CD4-positive, alpha-beta T cell (primary cell): ENCODE measurements at regions of chr11 and their contacts with region 1.

Region 1: DNA sequence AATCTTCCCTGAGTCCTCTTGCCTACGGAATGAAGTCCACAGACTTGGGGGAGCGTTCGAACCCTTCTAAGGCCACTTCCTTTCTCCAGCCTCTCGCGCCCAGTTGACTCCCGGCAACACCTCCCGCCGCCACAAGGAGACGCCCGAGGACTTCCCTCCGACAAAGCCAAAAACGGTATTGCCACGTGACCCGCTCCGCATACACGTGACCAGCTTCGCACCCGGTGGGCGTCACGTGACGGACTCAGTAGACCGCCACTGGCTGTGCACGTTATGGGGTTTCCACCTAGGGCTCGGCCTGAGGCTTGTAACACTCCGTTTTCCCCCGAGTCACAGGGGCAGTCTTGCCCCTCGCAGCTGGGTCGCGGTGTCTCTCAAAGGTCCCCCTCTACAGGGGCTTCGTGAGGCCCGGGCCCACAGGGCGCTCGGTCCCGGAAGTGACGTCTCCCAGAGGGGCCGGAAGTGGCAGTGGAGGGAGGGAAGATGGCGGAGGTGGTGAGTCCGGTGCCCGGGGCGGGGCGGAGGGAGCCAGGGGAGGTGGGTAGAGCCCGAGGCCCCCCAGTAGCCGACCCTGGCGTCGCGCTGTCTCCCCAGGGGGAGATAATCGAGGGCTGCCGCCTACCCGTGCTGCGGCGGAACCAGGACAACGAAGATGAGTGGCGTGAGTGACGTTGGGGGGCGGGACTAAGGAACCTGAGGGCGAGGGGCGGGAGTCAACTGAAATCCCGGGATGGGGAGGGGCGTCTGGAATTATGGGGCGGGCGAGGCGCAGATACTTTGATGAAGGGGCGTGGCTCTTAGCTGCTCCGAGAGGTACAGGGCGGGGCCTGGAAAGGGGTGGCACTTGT is at the start of gene KAT5:
- DNase-seq: peak; percentile 95 to 99 (median 96)
- ATAC-seq: peak; percentile 79
- H3K4me3 ChIP-seq: peak within 1 kb of the TSS; percentile 82
- H3K4me3 Mint-ChIP-seq: peak within 1 kb of the TSS; percentile 98
- H3K27ac ChIP-seq: peak within 1 kb of the TSS; percentile 99
- H3K27ac Mint-ChIP-seq: peak within 1 kb of the TSS; percentile 99
- H3K4me1 ChIP-seq: peaks cover 30% of the 10 kb centered on the region
- H3K4me1 Mint-ChIP-seq: peaks cover 23% of the 10 kb centered on the region
- H3K27me3 ChIP-seq: no peaks in the 10 kb centered on the region
- H3K27me3 Mint-ChIP-seq: no peaks in the 10 kb centered on the region
- CTCF ChIP-seq: peak; percentile 98
- total RNA-seq, gene KAT5: 90.9 to 99.6 TPM

Region 2: GRCh38 chr11:65625628-65626342 is 86.2 kb before region 1 on chr11:
- CTCF ChIA-PET with region 1: interaction called, 11 read pairs
- POLR2A ChIA-PET with region 1: interaction called, 7 read pairs
- intact Hi-C with region 1: loop called (anchors 2 to 5 kb)
- DNase-seq: peak; percentile 42 to 83 (median 54)
- ATAC-seq: peak; percentile 84
- H3K4me3 ChIP-seq: no peak overlapping the region
- H3K4me3 Mint-ChIP-seq: no peak overlapping the region
- H3K27ac ChIP-seq: no peak overlapping the region
- H3K27ac Mint-ChIP-seq: no peak overlapping the region
- H3K4me1 ChIP-seq: peaks cover 9% of the 10 kb centered on the region
- H3K4me1 Mint-ChIP-seq: peaks cover 13% of the 10 kb centered on the region
- H3K27me3 ChIP-seq: no peaks in the 10 kb centered on the region
- H3K27me3 Mint-ChIP-seq: no peaks in the 10 kb centered on the region
- CTCF ChIP-seq: peak; percentile 79

Region 3: GRCh38 chr11:65662799-65663638 is 49.0 kb before region 1 on chr11 and contains the start of gene RELA:
- CTCF ChIA-PET with region 1: interaction called, 6 read pairs
- POLR2A ChIA-PET with region 1: interaction called, 22 read pairs
- intact Hi-C with region 1: loop called in 1 of 2 experiments (anchors 5 kb)
- DNase-seq: peak; percentile 79 to 96 (median 89)
- ATAC-seq: peak; percentile 83
- H3K4me3 ChIP-seq: peak within 1 kb of the TSS; percentile 97
- H3K4me3 Mint-ChIP-seq: peak within 1 kb of the TSS; percentile 92
- H3K27ac ChIP-seq: peak within 1 kb of the TSS; percentile 96 to 97
- H3K27ac Mint-ChIP-seq: peak within 1 kb of the TSS; percentile 94
- H3K4me1 ChIP-seq: peaks cover 59% of the 10 kb centered on the region
- H3K4me1 Mint-ChIP-seq: peaks cover 33% of the 10 kb centered on the region
- H3K27me3 ChIP-seq: no peaks in the 10 kb centered on the region
- H3K27me3 Mint-ChIP-seq: no peaks in the 10 kb centered on the region
- CTCF ChIP-seq: no peak
- total RNA-seq, gene RELA: 379 to 382 TPM

Region 4: DNA sequence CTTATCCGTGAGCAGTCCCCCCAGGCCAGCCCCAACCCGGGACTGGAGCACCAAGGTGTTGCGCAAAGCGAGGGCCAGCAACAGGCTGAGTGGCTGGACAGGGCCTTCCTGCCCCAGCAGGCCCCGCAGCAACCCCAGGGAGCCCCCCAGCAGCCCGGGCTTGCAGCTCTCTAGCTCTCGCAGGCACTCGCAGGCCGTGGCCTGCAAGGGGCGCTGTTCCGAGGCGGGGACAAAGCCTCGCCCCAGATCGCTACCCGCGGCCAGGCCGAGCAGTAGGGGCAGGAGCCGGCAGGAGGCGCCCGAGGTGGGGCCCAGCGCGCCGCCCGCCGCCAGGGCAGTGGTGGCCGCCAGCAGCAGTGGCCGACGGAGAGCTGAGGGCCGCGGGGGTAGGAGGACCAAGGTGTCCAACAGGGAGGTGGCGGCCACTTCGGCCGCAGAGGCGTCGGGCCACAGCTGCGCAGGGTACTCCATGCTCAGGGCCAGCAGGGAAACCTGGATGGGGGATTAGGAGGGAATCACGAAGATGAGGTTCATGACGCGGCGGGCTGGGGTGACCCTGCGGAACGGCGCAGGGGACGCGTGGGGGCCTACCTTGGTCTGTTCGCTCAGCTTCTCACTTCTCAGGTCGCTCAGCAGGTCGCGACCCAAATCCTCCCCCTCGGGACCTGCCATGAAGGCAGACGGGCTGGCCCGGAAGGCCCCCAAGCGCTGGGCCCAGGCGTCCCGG is 68.0 kb after region 1 on chr11:
- CTCF ChIA-PET with region 1: interaction called, 40 read pairs
- POLR2A ChIA-PET with region 1: interaction called, 10 read pairs
- intact Hi-C with region 1: no loop called
- DNase-seq: peak; percentile 57 to 89 (median 72)
- ATAC-seq: peak; percentile 73
- H3K4me3 ChIP-seq: peak overlapping the region; percentile 92
- H3K4me3 Mint-ChIP-seq: peak overlapping the region; percentile 88
- H3K27ac ChIP-seq: peak overlapping the region in 1 of 2 donors; percentile 17
- H3K27ac Mint-ChIP-seq: peak overlapping the region; percentile 56
- H3K4me1 ChIP-seq: peaks cover 46% of the 10 kb centered on the region
- H3K4me1 Mint-ChIP-seq: peaks cover 17% of the 10 kb centered on the region
- H3K27me3 ChIP-seq: no peaks in the 10 kb centered on the region
- H3K27me3 Mint-ChIP-seq: peaks cover 12% of the 10 kb centered on the region
- CTCF ChIP-seq: peak; percentile 93

Region 5: GRCh38 chr11:65833297-65834030 is 121.5 kb after region 1 on chr11 and contains the start of gene SNX32:
- CTCF ChIA-PET with region 1: interaction called, 12 read pairs
- POLR2A ChIA-PET with region 1: interaction called, 7 read pairs
- intact Hi-C with region 1: no loop called
- DNase-seq: peak; percentile 88 to 97 (median 93)
- ATAC-seq: peak; percentile 100
- H3K4me3 ChIP-seq: peak within 1 kb of the TSS; percentile 76
- H3K4me3 Mint-ChIP-seq: no peak within 1 kb of the TSS
- H3K27ac ChIP-seq: peak within 1 kb of the TSS; percentile 18 to 31
- H3K27ac Mint-ChIP-seq: no peak within 1 kb of the TSS
- H3K4me1 ChIP-seq: peaks cover 24% of the 10 kb centered on the region
- H3K4me1 Mint-ChIP-seq: peaks cover 6% of the 10 kb centered on the region
- H3K27me3 ChIP-seq: no peaks in the 10 kb centered on the region
- H3K27me3 Mint-ChIP-seq: no peaks in the 10 kb centered on the region
- CTCF ChIP-seq: no peak
- total RNA-seq, gene SNX32: 0.33 to 0.61 TPM

Region 6: DNA sequence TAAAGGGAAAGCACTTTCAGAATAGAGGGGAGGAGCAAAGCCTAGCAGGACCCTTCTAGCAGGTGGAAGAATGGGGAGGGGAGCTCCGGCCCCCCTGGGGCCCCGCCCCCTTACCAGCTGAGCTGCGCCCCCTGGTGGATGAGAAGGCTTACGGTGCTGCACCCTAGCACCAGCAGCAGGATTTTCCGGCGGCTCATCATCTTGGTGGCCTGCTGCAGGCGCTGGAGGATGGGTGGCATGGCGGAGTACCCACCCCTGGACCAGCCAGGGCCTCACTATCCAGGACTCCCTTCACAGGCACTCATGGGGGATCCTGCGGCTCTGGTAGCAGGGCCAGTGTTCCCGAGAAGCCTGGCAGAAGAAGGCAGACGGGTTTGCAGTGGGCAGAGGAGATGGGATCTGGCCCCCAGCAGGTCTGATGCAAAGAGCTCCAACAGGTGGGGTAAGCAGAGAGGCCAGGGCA is 333.2 kb after region 1 on chr11:
- CTCF ChIA-PET with region 1: interaction called, 8 read pairs
- POLR2A ChIA-PET with region 1: interaction called, 6 read pairs
- intact Hi-C with region 1: loop called in 1 of 2 experiments (anchors 10 kb)
- DNase-seq: peak; percentile 72 to 92 (median 82)
- ATAC-seq: peak; percentile 98
- H3K4me3 ChIP-seq: no peak overlapping the region
- H3K4me3 Mint-ChIP-seq: no peak overlapping the region
- H3K27ac ChIP-seq: no peak overlapping the region
- H3K27ac Mint-ChIP-seq: no peak overlapping the region
- H3K4me1 ChIP-seq: peaks cover 26% of the 10 kb centered on the region
- H3K4me1 Mint-ChIP-seq: peaks cover 17% of the 10 kb centered on the region
- H3K27me3 ChIP-seq: no peaks in the 10 kb centered on the region
- H3K27me3 Mint-ChIP-seq: peaks cover 5% of the 10 kb centered on the region
- CTCF ChIP-seq: peak; percentile 91

Region 7: DNA sequence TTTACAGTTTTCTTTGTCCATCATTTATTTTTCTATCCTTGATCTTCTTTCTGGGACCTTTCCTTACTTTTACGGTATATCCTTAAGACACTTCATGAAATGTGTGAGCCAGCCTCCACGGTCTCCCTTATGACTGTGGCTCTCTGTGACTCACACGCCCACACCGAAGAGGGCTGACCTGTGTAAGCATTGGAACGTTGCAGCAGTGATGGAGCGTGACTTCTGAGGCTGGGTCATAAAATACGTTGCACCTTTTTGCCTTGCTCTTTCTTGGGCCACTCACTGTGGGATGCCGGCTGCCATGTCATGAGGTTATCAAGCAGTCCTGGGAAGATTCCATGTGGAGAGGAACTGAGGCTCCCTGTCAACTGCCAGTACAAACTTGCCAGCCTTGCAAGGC is 460.1 kb after region 1 on chr11:
- CTCF ChIA-PET with region 1: no interaction called
- POLR2A ChIA-PET with region 1: no interaction called
- intact Hi-C with region 1: no loop called
- DNase-seq: no peak
- ATAC-seq: no peak
- H3K4me3 ChIP-seq: no peak overlapping the region
- H3K4me3 Mint-ChIP-seq: no peak overlapping the region
- H3K27ac ChIP-seq: no peak overlapping the region
- H3K27ac Mint-ChIP-seq: no peak overlapping the region
- H3K4me1 ChIP-seq: peaks cover 3% of the 10 kb centered on the region
- H3K4me1 Mint-ChIP-seq: peaks cover 50% of the 10 kb centered on the region
- H3K27me3 ChIP-seq: no peaks in the 10 kb centered on the region
- H3K27me3 Mint-ChIP-seq: no peaks in the 10 kb centered on the region
- CTCF ChIP-seq: no peak

Region 8: DNA sequence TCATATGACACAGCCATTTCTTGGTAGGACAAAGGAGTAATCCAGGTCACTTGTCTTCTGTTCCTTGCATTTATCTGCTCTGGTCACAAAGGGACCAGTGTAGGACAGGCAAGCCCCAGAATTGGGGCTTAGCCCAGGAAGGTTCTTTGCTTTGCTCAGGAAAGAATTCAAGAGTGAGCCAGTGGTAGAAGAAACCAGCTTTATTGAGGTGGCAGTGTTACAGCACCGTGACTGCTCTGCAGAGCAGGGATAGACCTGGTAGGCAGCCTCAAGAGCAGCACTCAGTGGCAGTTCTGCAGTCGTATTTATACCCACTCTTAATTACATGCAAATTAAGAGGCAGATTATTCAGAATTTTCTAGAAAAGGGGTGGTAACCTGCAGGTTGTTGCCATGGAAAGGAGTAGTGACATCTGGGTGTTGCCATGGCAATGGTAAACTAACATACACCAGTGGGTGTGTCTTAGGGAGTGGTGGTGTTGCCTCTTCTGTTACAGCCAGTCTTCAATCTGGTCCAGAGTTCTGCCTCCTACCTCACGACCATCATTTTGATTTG is 471.6 kb after region 1 on chr11:
- CTCF ChIA-PET with region 1: no interaction called
- POLR2A ChIA-PET with region 1: no interaction called
- intact Hi-C with region 1: no loop called
- DNase-seq: peak in 5 of 14 experiments; percentile 1 to 77 (median 49)
- ATAC-seq: peak; percentile 91
- H3K4me3 ChIP-seq: no peak overlapping the region
- H3K4me3 Mint-ChIP-seq: peak overlapping the region; percentile 11
- H3K27ac ChIP-seq: no peak overlapping the region
- H3K27ac Mint-ChIP-seq: peak overlapping the region; percentile 83
- H3K4me1 ChIP-seq: peaks cover 23% of the 10 kb centered on the region
- H3K4me1 Mint-ChIP-seq: peaks cover 70% of the 10 kb centered on the region
- H3K27me3 ChIP-seq: no peaks in the 10 kb centered on the region
- H3K27me3 Mint-ChIP-seq: no peaks in the 10 kb centered on the region
- CTCF ChIP-seq: no peak